Astrocyte of the cerebellum (primary cell): ENCODE measurements at regions of chr16 and their contacts with region 1.

Region 1: GRCh38 chr16:9665851-9666271 is 516.4 kb downstream of the GRIN2A start:
- DNase-seq: no peak
- H3K4me3 ChIP-seq: no peak overlapping the region
- CTCF ChIP-seq: no peak

Region 2: DNA sequence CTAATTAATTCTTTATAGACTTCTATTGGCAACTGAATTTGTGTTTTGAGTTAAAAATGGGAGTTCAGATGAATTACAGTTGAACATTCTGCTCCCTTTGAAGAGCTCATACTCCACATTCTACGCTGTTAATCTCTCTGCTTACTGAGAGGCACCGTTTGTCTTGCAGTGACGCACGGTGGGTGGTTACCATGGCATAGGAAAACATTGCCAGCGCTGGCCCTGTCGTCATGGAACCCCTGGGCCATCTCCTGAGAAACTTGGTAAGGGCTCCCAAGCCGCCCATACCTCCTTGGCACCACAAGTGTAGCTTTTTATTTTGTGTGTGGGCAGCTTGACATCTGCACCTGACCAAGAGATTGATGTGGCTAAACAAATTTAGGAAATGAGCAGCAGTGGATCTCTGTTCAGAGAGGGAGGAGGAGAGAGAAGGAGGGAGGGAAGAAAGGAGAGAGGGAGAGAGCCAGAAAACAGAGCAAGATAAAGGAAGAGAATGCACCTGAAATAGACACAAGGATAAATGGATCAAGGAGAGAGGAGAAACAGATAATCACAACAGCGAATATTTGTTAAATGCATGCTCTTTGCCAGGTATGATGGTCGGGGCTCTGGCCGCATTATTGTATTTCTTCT is 175.9 kb before region 1 on chr16:
- in situ Hi-C with region 1: loop called (anchors 25 kb)
- DNase-seq: no peak
- H3K4me3 ChIP-seq: no peak overlapping the region
- CTCF ChIP-seq: no peak

Region 3: GRCh38 chr16:9755081-9755480 is 89.2 kb after region 1 on chr16:
- in situ Hi-C with region 1: loop called (anchors 25 kb)
- DNase-seq: no peak
- H3K4me3 ChIP-seq: no peak overlapping the region
- CTCF ChIP-seq: no peak